HEK293 (cell line): ENCODE measurements at regions of chr2 and their contacts with region 1.

Region 1: GRCh38 chr2:29105953-29106655 is 9.1 kb upstream of the CLIP4 start:
- H3K4me3 ChIP-seq: no peak overlapping the region
- H3K27ac ChIP-seq: no peak overlapping the region
- H3K4me1 ChIP-seq: no peaks in the 10 kb centered on the region
- CTCF ChIP-seq: no peak

Region 2: DNA sequence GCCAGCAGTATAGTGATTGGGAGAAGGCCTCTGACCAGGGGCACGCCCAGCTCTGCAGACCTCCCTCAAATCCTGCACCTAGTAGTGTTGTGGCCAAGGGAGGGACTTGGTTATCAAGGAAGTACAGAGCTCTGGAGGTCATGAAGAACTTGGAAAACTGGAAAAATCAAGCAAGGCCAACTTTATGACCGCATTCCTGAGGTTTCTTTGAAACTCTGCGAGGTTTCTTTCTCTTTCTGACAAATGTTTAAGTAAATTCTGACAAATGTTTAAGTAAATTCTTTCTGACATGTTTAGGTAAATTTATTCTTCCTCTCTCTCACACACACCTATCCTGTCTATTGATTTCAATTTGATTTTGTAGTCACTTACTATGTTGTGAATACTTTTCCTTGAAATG is 40.1 kb after region 1 on chr2:
- CTCF ChIA-PET with region 1: no interaction called
- POLR2A ChIA-PET with region 1: interaction called, 11 read pairs
- H3K4me3 ChIP-seq: no peak overlapping the region
- H3K27ac ChIP-seq: no peak overlapping the region
- H3K4me1 ChIP-seq: no peaks in the 10 kb centered on the region
- CTCF ChIP-seq: no peak

Region 3: DNA sequence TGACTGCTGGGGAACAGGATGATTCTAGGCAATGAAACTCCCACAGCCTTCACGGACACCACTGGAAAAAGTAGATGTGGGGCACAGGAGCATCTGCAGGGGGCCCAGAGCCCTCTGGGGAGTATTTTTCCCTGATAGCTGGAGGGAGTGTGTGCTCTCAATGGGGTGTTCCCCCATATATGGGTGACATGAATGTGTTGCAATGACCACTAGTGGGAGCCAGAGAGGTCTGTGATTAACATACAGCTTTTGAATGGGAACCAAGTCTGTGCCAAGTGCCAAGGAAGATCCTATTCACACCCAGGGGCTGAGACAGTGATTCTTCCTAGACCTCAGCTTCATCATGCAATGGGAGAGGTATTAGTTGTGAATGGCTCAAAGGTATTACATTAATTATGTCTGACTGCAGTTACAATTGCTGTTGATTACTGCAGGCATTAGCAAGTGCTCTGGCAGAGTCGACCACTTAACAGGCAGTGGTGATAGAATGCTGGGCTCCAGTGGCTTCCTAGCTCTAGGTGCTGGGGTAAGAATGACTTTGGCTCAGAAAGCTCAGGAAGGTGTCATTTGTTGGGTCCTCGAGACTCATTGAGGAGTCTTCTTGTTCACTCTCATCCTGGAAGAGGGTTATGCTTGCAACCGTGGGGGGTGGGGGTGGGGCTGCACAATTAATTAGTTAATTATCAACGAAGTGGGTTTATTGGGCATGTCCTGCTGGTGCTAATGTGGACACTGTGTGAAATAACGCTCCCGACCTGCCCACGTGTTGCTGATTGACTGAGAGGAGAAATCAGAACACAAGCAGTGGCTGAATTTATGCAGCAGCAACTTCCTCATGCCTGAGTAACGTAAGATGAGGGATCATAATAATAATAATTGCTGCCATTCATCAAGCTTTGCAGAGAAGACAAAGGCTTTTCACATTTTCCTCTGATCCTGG is 203.3 kb after region 1 on chr2:
- CTCF ChIA-PET with region 1: no interaction called
- POLR2A ChIA-PET with region 1: no interaction called
- H3K4me3 ChIP-seq: no peak overlapping the region
- H3K27ac ChIP-seq: no peak overlapping the region
- H3K4me1 ChIP-seq: no peaks in the 10 kb centered on the region
- CTCF ChIP-seq: peak; percentile 54